ENCODE measurements at regions of chr20 and their contacts with region 1.

Region 1: GRCh38 chr20:35741892-35742740 is at the start of gene RBM39:
- DNase-seq: peak; percentile 99
- ATAC-seq: peak; percentile 94
- H3K4me3 Mint-ChIP-seq: peak within 1 kb of the TSS; percentile 98
- H3K27ac Mint-ChIP-seq: peak within 1 kb of the TSS; percentile 100
- H3K4me1 Mint-ChIP-seq: peaks cover 29% of the 10 kb centered on the region
- H3K27me3 Mint-ChIP-seq: no peaks in the 10 kb centered on the region
- CTCF ChIP-seq: no peak
- total RNA-seq, gene RBM39: 221 to 231 TPM (median 223 TPM) in 3 replicates

Region 2: DNA sequence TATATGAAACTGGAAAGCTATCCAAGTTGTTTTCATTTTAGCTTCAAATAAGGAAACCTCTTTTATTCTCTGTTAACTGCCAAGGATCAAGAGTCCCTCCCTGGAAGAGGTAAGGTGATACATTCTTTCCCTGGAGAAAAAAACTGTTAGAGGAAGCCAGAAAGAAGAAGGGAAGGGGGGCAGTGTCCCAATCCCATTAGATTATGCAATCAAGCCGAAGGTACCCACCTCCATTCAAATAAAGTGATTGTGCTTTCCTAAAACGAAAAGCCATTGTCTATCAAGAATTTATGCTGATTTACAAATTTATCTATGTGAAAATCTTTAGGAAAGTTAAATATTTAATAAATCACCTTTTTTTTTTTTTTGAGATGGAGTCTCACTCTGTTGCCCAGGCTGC is 320.8 kb before region 1 on chr20:
- CTCF ChIA-PET with region 1: no interaction called
- POLR2A ChIA-PET with region 1: no interaction called
- DNase-seq: no peak
- ATAC-seq: no peak
- H3K4me3 Mint-ChIP-seq: no peak overlapping the region
- H3K27ac Mint-ChIP-seq: no peak overlapping the region
- H3K4me1 Mint-ChIP-seq: no peaks in the 10 kb centered on the region
- H3K27me3 Mint-ChIP-seq: peaks cover 9% of the 10 kb centered on the region
- CTCF ChIP-seq: no peak

Region 3: GRCh38 chr20:35454881-35455609 is 287.1 kb before region 1 on chr20 and contains the start of gene CEP250:
- CTCF ChIA-PET with region 1: no interaction called
- POLR2A ChIA-PET with region 1: interaction called, 10 read pairs
- DNase-seq: peak; percentile 97
- ATAC-seq: peak; percentile 92
- H3K4me3 Mint-ChIP-seq: peak within 1 kb of the TSS; percentile 90
- H3K27ac Mint-ChIP-seq: peak within 1 kb of the TSS; percentile 99
- H3K4me1 Mint-ChIP-seq: peaks cover 32% of the 10 kb centered on the region
- H3K27me3 Mint-ChIP-seq: no peaks in the 10 kb centered on the region
- CTCF ChIP-seq: no peak
- total RNA-seq, gene CEP250: 63.1 to 66.9 TPM (median 65.8 TPM) in 3 replicates

Region 4: DNA sequence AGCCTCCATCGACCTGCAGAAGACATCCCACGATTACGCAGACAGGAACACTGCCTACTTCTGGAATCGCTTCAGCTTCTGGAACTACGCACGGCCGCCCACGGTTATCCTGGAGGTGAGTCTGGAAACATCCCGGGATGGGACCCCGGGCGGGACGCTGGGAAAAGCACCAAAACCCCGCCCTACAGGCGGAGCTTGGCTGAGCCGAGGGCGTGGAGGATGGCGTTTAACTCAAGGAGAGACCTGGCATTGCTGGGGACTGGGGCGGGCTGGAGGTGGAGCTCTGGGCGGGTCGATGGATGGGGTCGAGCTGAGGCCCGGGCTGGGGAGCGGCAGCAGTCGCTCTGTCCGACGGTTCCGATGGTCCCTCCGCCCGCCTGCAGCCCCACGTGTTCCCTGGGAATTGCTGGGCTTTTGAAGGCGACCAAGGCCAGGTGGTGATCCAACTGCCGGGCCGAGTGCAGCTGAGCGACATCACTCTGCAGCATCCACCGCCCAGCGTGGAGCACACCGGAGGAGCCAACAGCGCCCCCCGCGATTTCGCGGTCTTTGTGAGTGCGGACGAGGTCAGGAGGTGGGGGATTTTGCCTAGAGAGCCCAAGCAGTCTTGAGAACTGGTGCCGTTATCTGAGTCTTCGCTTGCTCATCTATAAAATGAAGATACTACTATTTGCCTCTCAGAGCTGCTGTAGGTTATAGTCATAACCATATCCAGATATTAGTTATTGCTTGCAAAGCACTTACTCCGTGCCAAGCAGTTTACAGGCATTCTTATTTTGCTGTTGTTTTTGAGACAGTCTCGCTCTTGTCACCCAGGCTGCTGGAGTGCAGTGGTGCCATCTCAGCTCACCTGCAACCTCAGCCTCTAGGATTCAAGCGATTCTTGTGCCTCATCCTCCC is 122.7 kb before region 1 on chr20:
- CTCF ChIA-PET with region 1: interaction called, 9 read pairs
- POLR2A ChIA-PET with region 1: interaction called, 10 read pairs
- DNase-seq: peak; percentile 96
- ATAC-seq: peak; percentile 72
- H3K4me3 Mint-ChIP-seq: peak overlapping the region; percentile 89
- H3K27ac Mint-ChIP-seq: peak overlapping the region; percentile 86; the same call in 1 of the 2 replicates
- H3K4me1 Mint-ChIP-seq: peaks cover 15% of the 10 kb centered on the region
- H3K27me3 Mint-ChIP-seq: peaks cover 18% of the 10 kb centered on the region
- CTCF ChIP-seq: no peak; the same call in 1 of the 2 replicates

Region 5: GRCh38 chr20:35635652-35636051 is 106.5 kb before region 1 on chr20:
- CTCF ChIA-PET with region 1: no interaction called
- POLR2A ChIA-PET with region 1: no interaction called
- DNase-seq: no peak
- ATAC-seq: no peak; the same call in 1 of the 2 replicates
- H3K4me3 Mint-ChIP-seq: no peak overlapping the region
- H3K27ac Mint-ChIP-seq: peak overlapping the region; percentile 62
- H3K4me1 Mint-ChIP-seq: peaks cover 24% of the 10 kb centered on the region
- H3K27me3 Mint-ChIP-seq: no peaks in the 10 kb centered on the region
- CTCF ChIP-seq: no peak

Region 6: GRCh38 chr20:35690265-35690664 is 51.9 kb before region 1 on chr20:
- CTCF ChIA-PET with region 1: no interaction called
- POLR2A ChIA-PET with region 1: no interaction called
- DNase-seq: no peak
- ATAC-seq: no peak
- H3K4me3 Mint-ChIP-seq: no peak overlapping the region
- H3K27ac Mint-ChIP-seq: no peak overlapping the region
- H3K4me1 Mint-ChIP-seq: no peaks in the 10 kb centered on the region
- H3K27me3 Mint-ChIP-seq: no peaks in the 10 kb centered on the region
- CTCF ChIP-seq: no peak

Region 7: GRCh38 chr20:35726759-35727711 is 15.1 kb before region 1 on chr20:
- CTCF ChIA-PET with region 1: no interaction called
- POLR2A ChIA-PET with region 1: interaction called, 17 read pairs
- DNase-seq: no peak
- ATAC-seq: no peak
- H3K4me3 Mint-ChIP-seq: no peak overlapping the region
- H3K27ac Mint-ChIP-seq: no peak overlapping the region
- H3K4me1 Mint-ChIP-seq: no peaks in the 10 kb centered on the region
- H3K27me3 Mint-ChIP-seq: no peaks in the 10 kb centered on the region
- CTCF ChIP-seq: no peak

Region 8: GRCh38 chr20:35771689-35772562 is 29.8 kb after region 1 on chr20 and contains the start of gene PHF20:
- CTCF ChIA-PET with region 1: interaction called, 20 read pairs
- POLR2A ChIA-PET with region 1: interaction called, 44 read pairs
- DNase-seq: peak; percentile 99
- ATAC-seq: peak; percentile 89
- H3K4me3 Mint-ChIP-seq: peak within 1 kb of the TSS; percentile 91
- H3K27ac Mint-ChIP-seq: peak within 1 kb of the TSS; percentile 67
- H3K4me1 Mint-ChIP-seq: peaks cover 53% of the 10 kb centered on the region
- H3K27me3 Mint-ChIP-seq: peaks cover 20% of the 10 kb centered on the region
- CTCF ChIP-seq: no peak
- total RNA-seq, gene PHF20: 65.8 to 70.0 TPM (median 66.8 TPM) in 3 replicates

Region 9: DNA sequence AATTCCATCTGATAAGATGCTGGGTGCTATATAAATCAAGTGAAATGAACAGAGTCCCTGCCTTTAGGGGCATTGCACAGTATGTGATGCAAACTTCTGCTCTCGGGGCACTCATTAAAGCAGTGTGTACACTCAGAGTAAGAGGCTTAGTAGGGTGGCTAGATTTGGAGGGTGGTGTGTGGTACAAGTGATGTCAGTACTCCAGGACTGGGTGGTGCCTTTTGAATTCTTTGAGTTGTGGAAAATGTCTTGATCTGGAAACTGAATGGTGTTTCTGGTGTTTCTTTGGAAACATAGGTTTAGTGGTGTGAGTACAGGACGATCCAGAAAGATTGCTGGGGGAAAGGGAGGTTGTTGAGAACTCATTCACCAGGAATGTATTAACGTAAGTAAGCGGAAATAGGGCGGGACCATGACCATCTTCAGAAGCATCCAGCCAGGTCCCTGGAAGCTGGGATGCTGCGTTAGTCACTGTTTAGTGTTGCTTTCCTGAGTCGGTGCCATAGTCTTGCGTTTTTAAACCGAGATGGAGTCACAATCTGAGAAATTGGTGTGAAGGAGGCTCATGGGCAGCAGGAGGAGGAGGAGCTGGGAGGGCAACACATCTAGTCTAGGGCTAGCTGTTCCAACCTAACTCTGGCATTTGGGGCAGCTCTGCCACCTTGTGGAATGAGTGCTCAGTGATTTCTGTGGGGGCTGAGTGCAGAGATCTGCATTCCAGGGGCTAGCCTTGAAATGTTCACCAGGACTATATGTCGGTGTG is 141.8 kb after region 1 on chr20:
- CTCF ChIA-PET with region 1: interaction called, 12 read pairs
- POLR2A ChIA-PET with region 1: interaction called, 8 read pairs
- DNase-seq: peak; percentile 72
- ATAC-seq: peak; percentile 98
- H3K4me3 Mint-ChIP-seq: no peak overlapping the region
- H3K27ac Mint-ChIP-seq: peak overlapping the region; percentile 85
- H3K4me1 Mint-ChIP-seq: peaks cover 11% of the 10 kb centered on the region
- H3K27me3 Mint-ChIP-seq: no peaks in the 10 kb centered on the region
- CTCF ChIP-seq: no peak

Measured in WTC11 (cell line).